ENCODE measurements at regions of chr12 and their contacts with region 1.

Region 1: DNA sequence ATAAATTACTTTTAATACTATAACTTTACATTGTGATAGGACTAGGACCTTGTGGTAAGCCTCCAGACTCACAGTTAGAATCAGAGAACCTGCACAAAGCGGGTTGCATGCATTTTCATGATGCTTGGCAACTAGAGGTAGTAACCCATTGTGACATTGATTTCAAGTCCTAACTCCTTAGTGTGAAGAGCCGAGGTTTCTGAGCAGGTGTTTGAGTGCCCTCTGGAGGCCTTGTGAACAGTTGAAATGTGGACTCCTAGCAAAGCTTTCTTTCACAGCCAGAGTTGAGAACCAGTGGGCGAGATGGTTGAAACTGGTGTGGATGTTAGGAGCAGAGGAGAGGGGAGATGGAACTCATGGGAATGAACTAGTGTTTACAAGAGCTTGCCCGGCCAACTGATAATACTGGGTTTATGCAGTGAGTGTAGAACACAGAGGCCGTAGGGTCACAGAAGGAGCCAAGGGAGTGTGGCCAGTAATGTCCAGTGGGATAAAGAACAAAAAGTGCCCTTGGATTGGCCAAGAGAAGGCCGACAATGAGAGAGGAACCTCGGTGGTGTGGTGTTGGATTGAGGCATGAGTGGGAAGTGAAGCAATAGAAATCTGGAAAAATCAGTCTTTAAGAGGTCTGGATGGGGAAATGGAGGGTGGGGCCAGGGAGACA is 10.9 kb downstream of the ZNF664 start:
- DNase-seq: peak; percentile 68
- ATAC-seq: peak; percentile 86
- H3K4me3 Mint-ChIP-seq: no peak overlapping the region
- H3K27ac Mint-ChIP-seq: no peak overlapping the region
- H3K4me1 Mint-ChIP-seq: peaks cover 10% of the 10 kb centered on the region
- H3K27me3 Mint-ChIP-seq: no peaks in the 10 kb centered on the region

Region 2: DNA sequence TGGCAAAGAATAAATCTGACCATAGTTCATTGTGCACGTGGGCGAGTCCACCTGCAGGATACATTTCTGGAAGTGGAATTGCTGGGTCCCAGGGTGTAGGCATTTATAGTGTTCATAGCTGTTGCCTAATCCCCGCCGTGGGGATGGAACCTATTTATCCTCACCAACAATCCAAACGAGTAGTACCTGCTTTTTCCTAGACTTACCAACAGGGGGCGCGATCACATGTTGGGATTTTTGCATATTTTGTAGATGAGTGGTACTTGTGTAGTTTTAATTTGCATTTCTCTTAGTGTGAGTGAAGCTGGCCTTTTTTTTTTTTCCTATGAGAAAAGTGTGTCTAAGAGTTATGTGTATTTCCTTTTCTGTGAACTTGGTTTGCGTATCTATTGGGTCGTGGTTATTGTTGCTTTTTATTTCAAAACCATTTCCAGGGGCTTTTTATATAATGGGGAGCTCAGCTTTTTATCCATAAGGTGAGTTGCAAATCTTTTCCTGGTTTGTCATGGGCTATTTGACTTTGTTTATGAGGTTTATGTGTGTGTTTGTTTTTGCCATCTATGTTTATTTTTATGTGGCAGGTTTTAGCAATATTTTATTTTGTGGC is 78.5 kb before region 1 on chr12:
- CTCF ChIA-PET with region 1: interaction called, 72 read pairs
- POLR2A ChIA-PET with region 1: no interaction called
- DNase-seq: peak; percentile 76
- ATAC-seq: peak; percentile 35
- H3K4me3 Mint-ChIP-seq: no peak overlapping the region
- H3K27ac Mint-ChIP-seq: no peak overlapping the region
- H3K4me1 Mint-ChIP-seq: peaks cover 12% of the 10 kb centered on the region
- H3K27me3 Mint-ChIP-seq: no peaks in the 10 kb centered on the region

Region 3: DNA sequence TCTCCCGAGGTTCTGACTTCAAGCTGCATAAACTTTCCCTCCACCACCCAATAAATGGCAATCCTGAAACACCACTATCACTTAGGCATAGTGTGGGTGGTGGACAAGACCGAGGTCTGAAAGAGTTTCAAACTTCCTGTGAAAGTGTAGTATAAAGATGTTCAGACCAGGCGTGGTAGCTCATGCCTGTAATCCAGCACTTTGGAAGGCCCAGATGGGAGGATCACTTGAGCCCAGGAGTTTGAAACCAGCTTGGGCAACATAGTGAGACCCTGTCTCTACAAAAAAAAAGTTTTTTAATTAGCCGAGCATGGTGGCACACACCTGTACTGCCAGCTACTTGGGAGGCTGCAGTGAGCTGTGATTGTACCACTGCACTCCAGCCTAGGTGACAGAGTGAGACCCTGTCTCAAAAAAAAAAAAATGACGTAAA is 73.2 kb before region 1 on chr12:
- CTCF ChIA-PET with region 1: interaction called, 72 read pairs
- POLR2A ChIA-PET with region 1: no interaction called
- DNase-seq: no peak
- ATAC-seq: peak; percentile 31
- H3K4me3 Mint-ChIP-seq: no peak overlapping the region
- H3K27ac Mint-ChIP-seq: no peak overlapping the region
- H3K4me1 Mint-ChIP-seq: no peaks in the 10 kb centered on the region
- H3K27me3 Mint-ChIP-seq: no peaks in the 10 kb centered on the region

Region 4: DNA sequence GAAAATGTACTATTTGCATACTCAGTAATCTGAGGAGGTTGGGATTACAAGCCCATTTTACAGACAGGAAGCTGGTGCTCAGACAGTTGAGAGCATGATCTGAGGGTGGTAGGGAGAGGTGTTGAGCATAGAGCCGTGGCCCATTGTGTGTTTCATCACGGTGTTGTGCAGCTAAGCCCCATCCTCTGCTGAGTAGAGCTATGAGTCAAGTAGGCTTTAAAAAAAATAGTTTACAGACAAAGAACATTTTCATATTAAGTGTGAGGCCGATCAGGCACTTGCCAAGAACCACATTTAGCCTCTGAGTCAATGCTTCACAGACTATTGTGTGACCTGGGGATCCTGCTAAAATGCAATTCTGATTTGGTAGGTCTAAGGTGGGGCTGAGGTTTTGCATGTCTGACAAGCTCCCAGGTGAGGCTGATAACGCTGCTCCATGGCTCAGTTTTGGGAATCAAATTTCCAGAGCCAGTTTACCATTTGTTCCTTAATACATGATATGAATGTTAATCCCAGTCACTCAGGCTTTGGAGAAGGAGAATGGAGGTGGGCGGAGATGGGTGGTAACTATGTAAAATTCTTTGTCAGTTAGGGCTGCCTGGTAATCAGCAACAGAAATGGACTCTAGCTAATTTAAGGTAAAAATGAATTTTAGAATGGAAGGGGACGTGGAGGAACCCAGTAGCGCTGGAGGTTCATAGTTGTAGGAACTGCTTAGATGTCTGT is 11.2 kb after region 1 on chr12:
- CTCF ChIA-PET with region 1: interaction called, 14 read pairs
- POLR2A ChIA-PET with region 1: no interaction called
- DNase-seq: no peak
- ATAC-seq: no peak
- H3K4me3 Mint-ChIP-seq: no peak overlapping the region
- H3K27ac Mint-ChIP-seq: no peak overlapping the region
- H3K4me1 Mint-ChIP-seq: peaks cover 33% of the 10 kb centered on the region
- H3K27me3 Mint-ChIP-seq: no peaks in the 10 kb centered on the region

Region 5: DNA sequence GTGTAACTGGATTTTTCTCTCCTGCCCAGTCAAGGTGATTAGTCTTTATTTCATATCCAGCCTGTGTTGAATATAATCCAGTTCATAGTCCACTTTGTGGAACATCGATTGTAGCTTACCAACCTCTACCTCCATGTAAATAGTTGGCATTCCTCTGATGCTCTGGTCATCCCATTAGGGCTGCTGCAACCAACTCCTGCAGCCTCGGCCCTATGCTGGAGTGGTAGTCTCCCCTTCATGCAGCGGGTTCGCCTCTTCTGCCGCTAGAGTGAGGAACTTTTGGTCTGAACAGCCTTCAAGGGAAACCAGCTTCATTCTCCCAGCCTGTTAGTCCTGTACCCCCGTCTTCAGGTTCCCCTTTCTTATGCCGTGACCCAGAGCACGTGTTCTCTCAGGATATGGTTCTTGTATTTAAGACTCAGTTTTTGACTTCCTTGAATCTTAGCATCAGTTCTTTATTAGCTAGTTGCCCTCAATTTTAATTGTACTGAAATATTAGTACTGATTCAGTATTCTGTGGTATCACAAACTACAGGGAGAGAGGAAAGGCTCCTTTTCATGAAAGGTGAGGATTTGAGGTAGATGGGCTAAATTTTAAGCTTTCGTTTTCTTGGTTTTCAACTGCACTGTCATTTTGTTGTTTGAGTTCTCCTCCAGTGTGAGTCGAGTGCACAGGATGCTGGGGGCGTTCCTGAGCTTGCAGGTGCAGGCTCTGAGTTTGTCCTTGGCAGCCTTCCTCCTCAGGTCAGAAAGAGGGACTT is 22.3 kb after region 1 on chr12:
- CTCF ChIA-PET with region 1: interaction called, 11 read pairs
- POLR2A ChIA-PET with region 1: no interaction called
- DNase-seq: peak; percentile 53
- ATAC-seq: peak; percentile 76
- H3K4me3 Mint-ChIP-seq: peak overlapping the region; percentile 32
- H3K27ac Mint-ChIP-seq: peak overlapping the region; percentile 80
- H3K4me1 Mint-ChIP-seq: peaks cover 33% of the 10 kb centered on the region
- H3K27me3 Mint-ChIP-seq: no peaks in the 10 kb centered on the region

Region 6: GRCh38 chr12:124020514-124020949 is 36.6 kb after region 1 on chr12:
- CTCF ChIA-PET with region 1: no interaction called
- POLR2A ChIA-PET with region 1: no interaction called
- DNase-seq: no peak
- ATAC-seq: no peak
- H3K4me3 Mint-ChIP-seq: no peak overlapping the region
- H3K27ac Mint-ChIP-seq: no peak overlapping the region
- H3K4me1 Mint-ChIP-seq: peaks cover 3% of the 10 kb centered on the region
- H3K27me3 Mint-ChIP-seq: no peaks in the 10 kb centered on the region

Measured in activated CD8-positive, alpha-beta T cell treated with anti-CD3 and anti-CD28 coated beads, Interleukin-2, amount 10 ng/mL, durations not matched to agents 7 days and 5 days (primary cell).